Right cardiac atrium (tissue), 5 donors: ENCODE measurements at regions of chr12 and their contacts with region 1.

Region 1: DNA sequence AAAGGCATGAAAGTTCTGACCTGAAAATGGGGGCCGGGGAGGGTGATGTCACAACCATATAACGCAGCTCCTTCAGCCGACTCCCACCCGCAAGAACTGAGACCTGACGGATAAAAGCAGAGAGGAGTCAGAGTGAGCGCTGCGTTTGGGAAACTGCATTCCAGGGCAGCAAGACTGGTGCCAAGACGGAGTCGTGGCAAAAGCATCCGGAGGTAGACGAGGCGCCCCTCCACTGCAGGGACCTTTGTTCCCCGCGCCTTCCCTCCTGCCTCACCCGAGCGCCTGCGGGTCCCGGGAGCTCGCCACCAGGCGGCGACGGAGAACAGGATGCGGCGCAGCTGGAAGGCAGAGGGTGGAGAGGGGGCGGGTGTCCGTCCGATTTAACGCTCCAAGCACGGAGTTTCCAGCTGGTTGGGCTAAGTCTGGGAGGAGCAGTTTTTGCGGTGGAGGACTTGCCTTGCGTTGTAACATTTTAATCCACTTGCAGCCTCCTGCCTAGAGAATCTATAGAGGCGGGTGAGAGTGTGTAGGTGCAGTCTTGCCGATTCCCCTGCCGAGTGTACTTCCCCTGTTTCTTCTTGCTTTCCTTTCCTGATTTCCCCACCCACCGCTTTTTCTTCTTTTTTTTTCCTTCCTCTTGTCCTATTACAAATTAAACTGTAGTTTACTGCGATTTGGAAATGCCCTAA is 1.2 kb upstream of the CPNE8 start:
- DNase-seq: peak; percentile 92 to 96 (median 96)
- ATAC-seq: peak; percentile 82 to 85
- H3K4me3 ChIP-seq: peak overlapping the region; percentile 75
- H3K27ac ChIP-seq: peak overlapping the region; percentile 99
- H3K4me1 ChIP-seq: no peaks in the 10 kb centered on the region
- H3K27me3 ChIP-seq: no peaks in the 10 kb centered on the region

Region 2: DNA sequence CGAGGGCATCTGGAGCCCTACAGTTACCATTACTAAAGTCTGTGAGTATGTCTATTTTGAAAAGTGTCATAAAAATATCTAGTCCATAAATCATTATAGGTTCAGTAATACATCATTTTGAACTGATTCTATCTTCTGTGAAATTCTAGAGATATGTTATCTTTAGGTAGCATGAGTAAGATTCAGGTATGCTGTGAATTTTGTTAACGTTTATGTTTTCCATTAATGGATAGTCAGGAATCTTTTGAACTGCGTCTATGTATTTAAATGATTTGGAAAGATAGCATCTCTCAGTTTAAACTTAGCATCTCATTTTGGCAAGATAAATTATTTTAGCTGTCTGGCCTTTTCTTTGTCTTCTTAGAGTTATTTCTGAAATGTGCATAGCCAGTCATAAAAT is 581.7 kb before region 1 on chr12:
- intact Hi-C with region 1: loop called in 1 of 4 experiments (anchors 10 kb)
- DNase-seq: no peak
- ATAC-seq: no peak
- H3K4me3 ChIP-seq: no peak overlapping the region
- H3K27ac ChIP-seq: no peak overlapping the region
- H3K4me1 ChIP-seq: no peaks in the 10 kb centered on the region
- H3K27me3 ChIP-seq: no peaks in the 10 kb centered on the region

Region 3: DNA sequence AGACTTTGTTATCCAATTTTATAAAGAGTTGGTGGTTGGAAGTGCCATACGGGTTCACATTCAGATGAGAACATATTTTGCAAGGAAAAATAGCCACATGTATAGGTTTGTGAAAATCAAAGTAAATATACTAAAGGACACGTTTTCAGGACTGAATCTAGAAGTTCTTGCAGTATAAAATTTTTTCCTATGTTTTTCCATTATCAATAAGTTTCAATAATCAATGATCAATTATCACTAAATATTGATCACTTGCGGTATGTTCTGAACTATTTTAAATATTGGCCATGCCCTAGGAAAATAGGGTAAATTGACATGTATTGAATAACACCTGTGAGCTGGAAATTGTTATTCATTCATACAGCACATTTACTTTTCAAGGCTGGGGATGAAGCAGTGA is 564.2 kb before region 1 on chr12:
- intact Hi-C with region 1: loop called in 1 of 4 experiments (anchors 10 kb)
- DNase-seq: no peak
- ATAC-seq: no peak
- H3K4me3 ChIP-seq: no peak overlapping the region
- H3K27ac ChIP-seq: no peak overlapping the region
- H3K4me1 ChIP-seq: no peaks in the 10 kb centered on the region
- H3K27me3 ChIP-seq: no peaks in the 10 kb centered on the region

Region 4: GRCh38 chr12:38669530-38669929 is 237.1 kb before region 1 on chr12:
- intact Hi-C with region 1: loop called in 1 of 4 experiments (anchors 10 kb)
- DNase-seq: no peak
- ATAC-seq: no peak
- H3K4me3 ChIP-seq: no peak overlapping the region
- H3K27ac ChIP-seq: no peak overlapping the region
- H3K4me1 ChIP-seq: no peaks in the 10 kb centered on the region
- H3K27me3 ChIP-seq: no peaks in the 10 kb centered on the region

Region 5: GRCh38 chr12:38744041-38744440 is 162.6 kb before region 1 on chr12:
- intact Hi-C with region 1: no loop called
- DNase-seq: no peak
- ATAC-seq: no peak
- H3K4me3 ChIP-seq: no peak overlapping the region
- H3K27ac ChIP-seq: no peak overlapping the region
- H3K4me1 ChIP-seq: no peaks in the 10 kb centered on the region
- H3K27me3 ChIP-seq: no peaks in the 10 kb centered on the region